Endothelial cell of umbilical vein (primary cell): ENCODE measurements at regions of chr2 and their contacts with region 1.

Region 1: DNA sequence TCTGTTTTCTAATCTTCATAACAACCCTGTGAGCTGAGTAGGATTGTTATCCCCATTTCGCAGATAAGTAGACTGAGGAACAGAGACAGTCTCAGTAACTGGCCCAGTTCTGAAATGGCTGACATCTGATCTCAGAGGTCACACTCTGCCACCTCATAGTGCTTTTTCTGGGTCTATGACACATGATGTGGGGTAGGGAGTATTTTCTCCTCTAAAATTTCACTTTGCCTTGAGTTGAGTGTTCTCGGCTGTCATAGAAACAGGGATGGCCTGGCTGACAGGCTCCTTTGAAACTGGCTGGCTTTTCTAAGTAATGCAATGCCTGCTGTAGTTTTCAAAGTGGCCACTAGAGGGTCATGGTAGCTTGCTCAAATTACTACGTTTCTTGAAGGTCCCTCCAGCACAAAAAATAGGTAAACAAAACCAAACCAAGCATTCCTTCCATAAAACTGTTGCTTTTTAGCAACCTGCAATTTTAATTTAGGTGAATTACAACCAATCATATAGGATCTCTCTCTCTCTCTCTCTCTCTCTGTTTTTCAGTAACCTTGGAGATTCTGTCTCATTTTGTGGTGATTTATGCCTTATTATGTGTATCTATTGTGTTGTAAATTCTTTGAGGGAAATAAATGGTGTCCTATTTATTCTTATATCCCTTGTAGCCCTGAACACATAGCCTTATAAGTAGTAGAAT is 84.2 kb upstream of the TTN start:
- DNase-seq: peak; percentile 74
- H3K4me3 ChIP-seq: no peak overlapping the region
- H3K27ac ChIP-seq: no peak overlapping the region
- H3K4me1 ChIP-seq: peaks cover 2% of the 10 kb centered on the region
- H3K27me3 ChIP-seq: no peaks in the 10 kb centered on the region
- CTCF ChIP-seq: peak; percentile 74 to 85
- POLR2A ChIP-seq: no peak

Region 2: DNA sequence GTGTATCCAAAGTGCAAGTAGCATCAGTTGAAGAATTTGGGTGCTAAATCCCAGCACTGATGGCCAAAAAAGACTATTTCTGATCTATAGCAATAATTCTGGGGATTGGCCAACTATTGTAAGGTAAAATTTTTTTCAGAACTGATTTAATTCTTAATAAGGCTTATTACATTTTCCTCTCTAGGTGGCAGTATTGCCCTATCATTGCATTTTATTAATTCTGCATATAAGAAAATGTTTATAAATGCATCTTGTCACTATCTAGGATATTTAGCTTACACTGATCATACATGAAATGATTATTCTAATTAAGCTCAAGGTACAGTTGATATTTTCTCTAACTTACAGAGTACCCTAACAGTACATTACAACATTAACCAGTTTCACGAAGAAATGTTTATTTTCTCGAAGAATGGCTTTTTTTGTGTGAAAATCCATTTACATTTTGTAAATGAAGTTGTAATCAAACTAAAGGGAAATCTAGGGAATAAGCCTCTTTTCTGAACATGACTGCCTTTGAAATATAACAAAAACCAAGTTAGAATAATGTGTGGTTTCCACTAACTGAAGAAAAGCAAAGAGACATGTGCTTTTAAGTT is 95.2 kb before region 1 on chr2:
- CTCF ChIA-PET with region 1: interaction called, 20 read pairs
- POLR2A ChIA-PET with region 1: no interaction called
- dilution Hi-C with region 1: no loop called
- intact Hi-C with region 1: loop called (anchors 1 kb)
- DNase-seq: peak; percentile 71
- H3K4me3 ChIP-seq: no peak overlapping the region
- H3K27ac ChIP-seq: no peak overlapping the region
- H3K4me1 ChIP-seq: no peaks in the 10 kb centered on the region
- H3K27me3 ChIP-seq: peaks cover 0 to 2% of the 10 kb centered on the region in 2 experiments
- CTCF ChIP-seq: peak; percentile 12 to 25
- POLR2A ChIP-seq: no peak

Region 3: DNA sequence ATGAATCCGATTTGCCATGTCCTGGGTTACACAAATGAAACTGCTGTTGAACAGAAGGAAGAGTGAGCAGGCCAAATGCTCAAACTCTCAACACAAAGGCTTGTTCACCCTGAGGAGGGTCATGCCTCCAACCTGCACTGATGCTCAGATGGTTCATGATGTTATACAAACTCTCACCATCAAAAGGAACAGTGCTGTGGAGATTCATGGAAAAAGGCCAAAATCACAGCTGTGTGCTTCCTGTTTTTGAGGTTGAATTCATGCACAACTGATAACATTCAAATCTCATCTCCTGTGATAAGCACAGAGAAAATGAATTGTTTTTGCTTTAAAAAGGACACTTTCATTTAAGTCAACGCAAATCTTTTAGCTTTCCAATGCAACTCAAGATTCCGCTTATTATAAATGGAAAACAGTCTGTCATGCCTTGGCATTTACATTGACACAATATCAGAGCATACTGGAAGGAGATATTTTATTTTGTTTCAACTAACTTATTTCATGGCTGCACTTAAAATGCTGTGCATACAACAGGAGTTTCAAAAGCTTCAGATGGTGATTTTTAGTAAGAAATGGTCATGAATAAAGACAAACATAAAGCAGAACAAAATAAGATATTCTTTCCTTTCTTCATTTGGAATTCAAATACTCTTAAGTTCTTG is 62.0 kb before region 1 on chr2:
- CTCF ChIA-PET with region 1: interaction called, 13 read pairs
- POLR2A ChIA-PET with region 1: no interaction called
- dilution Hi-C with region 1: no loop called
- intact Hi-C with region 1: no loop called
- DNase-seq: peak; percentile 94
- H3K4me3 ChIP-seq: peak overlapping the region in 1 of 3 experiments; percentile 37
- H3K27ac ChIP-seq: peak overlapping the region; percentile 71
- H3K4me1 ChIP-seq: peaks cover 56% of the 10 kb centered on the region
- H3K27me3 ChIP-seq: no peaks in the 10 kb centered on the region
- CTCF ChIP-seq: no peak
- POLR2A ChIP-seq: no peak

Region 4: GRCh38 chr2:178905261-178905660 is 13.8 kb after region 1 on chr2:
- CTCF ChIA-PET with region 1: interaction called, 27 read pairs
- POLR2A ChIA-PET with region 1: no interaction called
- dilution Hi-C with region 1: no loop called
- intact Hi-C with region 1: no loop called
- DNase-seq: no peak
- H3K4me3 ChIP-seq: no peak overlapping the region
- H3K27ac ChIP-seq: no peak overlapping the region
- H3K4me1 ChIP-seq: no peaks in the 10 kb centered on the region
- H3K27me3 ChIP-seq: peaks cover 0 to 2% of the 10 kb centered on the region in 2 experiments
- CTCF ChIP-seq: no peak
- POLR2A ChIP-seq: no peak

Region 5: DNA sequence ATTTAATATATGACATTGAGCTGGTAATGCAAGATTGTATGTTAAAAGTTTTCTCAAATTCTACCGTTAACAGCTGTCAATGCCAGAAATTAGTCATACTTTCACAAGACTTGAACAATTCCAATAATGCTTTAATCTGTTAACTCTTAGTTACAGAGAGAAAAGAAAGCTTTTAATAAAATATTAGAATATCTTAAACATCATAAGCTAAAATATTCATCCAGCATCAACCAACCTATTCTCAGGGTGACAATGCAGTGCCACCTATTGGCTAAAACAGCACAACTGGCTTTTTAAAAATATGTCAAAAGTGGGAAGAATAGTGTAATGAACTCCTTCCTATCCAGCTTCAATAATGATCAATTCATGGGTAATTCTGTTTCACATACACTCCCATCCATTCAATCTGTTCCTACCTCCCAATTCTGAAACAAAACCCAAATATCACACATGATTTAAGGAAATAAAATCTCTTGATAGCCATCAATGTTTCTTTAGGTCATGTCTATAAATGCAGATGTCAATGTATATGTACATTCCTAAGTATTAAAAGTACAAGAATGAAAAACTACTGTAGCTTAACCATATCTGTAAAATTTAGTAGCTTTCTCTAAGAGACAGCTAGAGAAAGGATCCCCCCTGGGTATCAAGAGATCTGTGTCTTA is 238.3 kb after region 1 on chr2:
- CTCF ChIA-PET with region 1: interaction called, 22 read pairs
- POLR2A ChIA-PET with region 1: no interaction called
- dilution Hi-C with region 1: no loop called
- intact Hi-C with region 1: loop called (anchors 1 kb)
- DNase-seq: peak; percentile 35
- H3K4me3 ChIP-seq: no peak overlapping the region
- H3K27ac ChIP-seq: no peak overlapping the region
- H3K4me1 ChIP-seq: no peaks in the 10 kb centered on the region
- H3K27me3 ChIP-seq: no peaks in the 10 kb centered on the region
- CTCF ChIP-seq: peak; percentile 36 to 37
- POLR2A ChIP-seq: no peak